ENCODE measurements at regions of chr3 and their contacts with region 1.

Region 1: GRCh38 chr3:113745273-113746068 is 578 bp downstream of the NAA50 start:
- DNase-seq: peak; percentile 89
- H3K4me3 ChIP-seq: peak overlapping the region; percentile 84
- H3K27ac ChIP-seq: peak overlapping the region; percentile 99
- H3K4me1 ChIP-seq: peaks cover 33% of the 10 kb centered on the region
- H3K27me3 ChIP-seq: no peaks in the 10 kb centered on the region
- CTCF ChIP-seq: peak; percentile 64

Region 2: DNA sequence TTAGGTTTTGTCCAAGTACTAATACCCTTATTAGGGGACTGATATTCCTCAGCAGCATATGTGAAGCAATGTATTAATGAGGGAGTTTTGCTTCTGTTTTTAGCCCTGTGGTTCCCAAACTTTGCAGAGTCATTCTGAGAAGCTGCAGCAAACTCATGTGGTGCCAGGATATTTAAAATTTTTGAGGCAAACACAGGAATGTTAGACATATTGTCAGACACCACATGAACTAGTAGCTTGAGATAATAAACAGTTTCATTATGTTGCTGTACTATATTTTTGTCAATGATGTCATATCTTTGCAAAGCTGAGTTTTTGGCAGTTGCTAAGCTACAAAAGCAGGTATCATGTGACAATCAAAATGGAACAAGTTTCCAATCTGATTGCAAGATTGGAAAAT is 38.0 kb after region 1 on chr3:
- CTCF ChIA-PET with region 1: interaction called, 4 read pairs
- POLR2A ChIA-PET with region 1: no interaction called
- intact Hi-C with region 1: loop called (anchors 5 kb)
- DNase-seq: peak; percentile 78
- H3K4me3 ChIP-seq: peak overlapping the region; percentile 22
- H3K27ac ChIP-seq: peak overlapping the region; percentile 90
- H3K4me1 ChIP-seq: peaks cover 41% of the 10 kb centered on the region
- H3K27me3 ChIP-seq: no peaks in the 10 kb centered on the region
- CTCF ChIP-seq: no peak

Region 3: GRCh38 chr3:114056130-114057010 is 310.9 kb after region 1 on chr3 and contains the starts of genes CCDC191 and QTRT2:
- CTCF ChIA-PET with region 1: no interaction called
- POLR2A ChIA-PET with region 1: no interaction called
- intact Hi-C with region 1: loop called (anchors 10 kb)
- DNase-seq: peak; percentile 100
- H3K4me3 ChIP-seq: peak within 1 kb of the TSS; percentile 67
- H3K27ac ChIP-seq: peak within 1 kb of the TSS; percentile 65
- H3K4me1 ChIP-seq: peaks cover 5% of the 10 kb centered on the region
- H3K27me3 ChIP-seq: no peaks in the 10 kb centered on the region
- CTCF ChIP-seq: no peak
- total RNA-seq, gene CCDC191: 1.1 and 3.2 TPM in 2 replicates
- total RNA-seq, gene QTRT2: 49.6 and 62.4 TPM in 2 replicates